ENCODE measurements at regions of chr7 and their contacts with region 1.

Region 1: GRCh38 chr7:113159746-113160339 is 41.5 kb upstream of the SMIM30 start:
- DNase-seq: no peak
- H3K4me3 ChIP-seq: no peak overlapping the region
- H3K27ac ChIP-seq: no peak overlapping the region
- H3K4me1 ChIP-seq: no peaks in the 10 kb centered on the region
- H3K27me3 ChIP-seq: no peaks in the 10 kb centered on the region
- CTCF ChIP-seq: peak; percentile 49

Region 2: GRCh38 chr7:113217314-113217713 is 57.5 kb after region 1 on chr7:
- intact Hi-C with region 1: loop called (anchors 10 kb)
- DNase-seq: no peak
- H3K4me3 ChIP-seq: no peak overlapping the region
- H3K27ac ChIP-seq: no peak overlapping the region
- H3K4me1 ChIP-seq: no peaks in the 10 kb centered on the region
- H3K27me3 ChIP-seq: no peaks in the 10 kb centered on the region
- CTCF ChIP-seq: no peak

Region 3: GRCh38 chr7:113421696-113422330 is 262.0 kb after region 1 on chr7:
- intact Hi-C with region 1: loop called (anchors 5 kb)
- DNase-seq: peak; percentile 80
- H3K4me3 ChIP-seq: no peak overlapping the region
- H3K27ac ChIP-seq: no peak overlapping the region
- H3K4me1 ChIP-seq: no peaks in the 10 kb centered on the region
- H3K27me3 ChIP-seq: no peaks in the 10 kb centered on the region
- CTCF ChIP-seq: peak; percentile 69